ENCODE measurements at regions of chrX and their contacts with region 1.

Region 1: GRCh38 chrX:101759000-101759399 is 99.3 kb upstream of the ARMCX2 start:
- DNase-seq: peak; percentile 33
- ATAC-seq: peak; percentile 74
- H3K4me3 Mint-ChIP-seq: no peak overlapping the region
- H3K27ac Mint-ChIP-seq: no peak overlapping the region
- H3K4me1 Mint-ChIP-seq: no peaks in the 10 kb centered on the region
- H3K27me3 Mint-ChIP-seq: peaks cover 4% of the 10 kb centered on the region

Region 2: GRCh38 chrX:101415180-101416145 is 343.5 kb before region 1 on chrX:
- CTCF ChIA-PET with region 1: interaction called, 15 read pairs
- POLR2A ChIA-PET with region 1: no interaction called
- DNase-seq: peak; percentile 56
- ATAC-seq: peak; percentile 37
- H3K4me3 Mint-ChIP-seq: no peak overlapping the region
- H3K27ac Mint-ChIP-seq: peak overlapping the region; percentile 20
- H3K4me1 Mint-ChIP-seq: peaks cover 40% of the 10 kb centered on the region
- H3K27me3 Mint-ChIP-seq: no peaks in the 10 kb centered on the region

Region 3: GRCh38 chrX:101774340-101774739 is 15.3 kb after region 1 on chrX:
- CTCF ChIA-PET with region 1: no interaction called
- POLR2A ChIA-PET with region 1: no interaction called
- DNase-seq: no peak
- ATAC-seq: no peak
- H3K4me3 Mint-ChIP-seq: no peak overlapping the region
- H3K27ac Mint-ChIP-seq: no peak overlapping the region
- H3K4me1 Mint-ChIP-seq: no peaks in the 10 kb centered on the region
- H3K27me3 Mint-ChIP-seq: peaks cover 2% of the 10 kb centered on the region

Measured in activated CD8-positive, alpha-beta T cell treated with anti-CD3 and anti-CD28 coated beads, Interleukin-2, amount 10 ng/mL, durations not matched to agents 7 days and 5 days (primary cell).